ENCODE measurements at regions of chr5 and their contacts with region 1.

Region 1: DNA sequence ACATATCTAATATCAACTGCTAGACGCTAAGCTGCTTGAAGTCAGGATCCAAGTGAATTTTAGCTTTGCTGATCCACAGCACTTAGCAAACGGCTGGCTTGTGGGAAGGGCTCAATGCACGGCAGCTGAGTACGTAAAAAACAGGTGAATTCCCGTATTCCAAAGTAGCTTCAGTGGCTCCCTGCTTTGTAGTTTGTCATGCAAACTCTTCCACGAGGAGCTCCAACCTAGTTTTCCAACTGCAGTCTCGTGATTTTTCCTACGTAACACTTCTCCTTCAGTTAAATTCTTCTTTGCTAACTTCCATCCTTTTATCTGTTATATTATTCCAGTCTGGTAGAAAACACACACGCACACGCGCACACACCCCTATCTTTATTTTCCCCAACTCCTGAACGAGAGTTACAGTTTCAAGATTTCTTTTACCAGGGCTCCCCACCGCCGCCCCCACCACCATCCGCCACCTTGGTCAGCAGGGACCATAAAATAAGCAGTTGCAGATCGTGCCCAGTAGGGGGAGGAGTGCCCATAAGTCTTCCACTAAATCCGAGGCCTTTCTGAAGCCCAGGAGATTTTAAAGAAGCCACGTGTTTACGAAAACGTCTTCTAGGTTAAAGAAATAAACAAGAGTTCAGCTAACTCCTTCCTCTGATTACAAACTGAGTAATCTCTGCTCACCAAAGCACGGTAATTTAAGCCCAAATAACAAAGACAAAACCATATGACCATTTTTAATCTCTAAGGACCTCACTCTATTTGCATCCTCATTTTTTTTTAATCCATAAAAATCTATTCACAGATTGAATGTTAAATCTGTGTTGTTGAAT is 34.8 kb upstream of the TRIO start:
- DNase-seq: peak; percentile 78
- H3K4me3 ChIP-seq: peak overlapping the region; percentile 15
- H3K27ac ChIP-seq: no peak overlapping the region
- H3K4me1 ChIP-seq: no peaks in the 10 kb centered on the region
- H3K27me3 ChIP-seq: no peaks in the 10 kb centered on the region
- CTCF ChIP-seq: peak; percentile 70

Region 2: GRCh38 chr5:13994621-13995253 is 113.6 kb before region 1 on chr5:
- intact Hi-C with region 1: loop called (anchors 10 kb)
- DNase-seq: no peak
- H3K4me3 ChIP-seq: no peak overlapping the region
- H3K27ac ChIP-seq: no peak overlapping the region
- H3K4me1 ChIP-seq: no peaks in the 10 kb centered on the region
- H3K27me3 ChIP-seq: no peaks in the 10 kb centered on the region
- CTCF ChIP-seq: no peak

Region 3: GRCh38 chr5:14270209-14270702 is 161.9 kb after region 1 on chr5:
- intact Hi-C with region 1: loop called (anchors 2 kb)
- DNase-seq: peak; percentile 49
- H3K4me3 ChIP-seq: no peak overlapping the region
- H3K27ac ChIP-seq: peak overlapping the region; percentile 19
- H3K4me1 ChIP-seq: peaks cover 15% of the 10 kb centered on the region
- H3K27me3 ChIP-seq: no peaks in the 10 kb centered on the region
- CTCF ChIP-seq: peak; percentile 67